Posterior vena cava (tissue), 2 donors: ENCODE measurements at regions of chr1 and their contacts with region 1.

Region 1: DNA sequence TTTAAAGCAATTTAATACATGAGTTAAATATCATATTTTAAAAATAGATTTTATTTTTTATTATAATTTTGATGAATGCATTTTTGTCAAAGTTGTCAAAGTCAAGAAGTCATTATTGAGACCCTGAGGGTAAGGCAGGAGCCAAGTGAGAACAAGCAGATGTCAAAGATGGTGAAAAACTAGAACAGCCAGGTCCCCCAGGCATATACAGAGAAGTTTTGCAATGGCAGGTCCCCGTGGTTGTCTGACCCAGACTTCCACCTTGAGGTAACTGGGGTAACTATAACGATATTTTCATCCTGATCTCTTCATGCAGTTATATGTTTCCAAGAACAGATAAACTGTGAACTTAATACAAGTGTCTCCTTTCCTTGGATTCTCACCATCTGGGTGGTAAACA is 26.5 kb downstream of the PTPRC start:
- DNase-seq: no peak

Region 2: DNA sequence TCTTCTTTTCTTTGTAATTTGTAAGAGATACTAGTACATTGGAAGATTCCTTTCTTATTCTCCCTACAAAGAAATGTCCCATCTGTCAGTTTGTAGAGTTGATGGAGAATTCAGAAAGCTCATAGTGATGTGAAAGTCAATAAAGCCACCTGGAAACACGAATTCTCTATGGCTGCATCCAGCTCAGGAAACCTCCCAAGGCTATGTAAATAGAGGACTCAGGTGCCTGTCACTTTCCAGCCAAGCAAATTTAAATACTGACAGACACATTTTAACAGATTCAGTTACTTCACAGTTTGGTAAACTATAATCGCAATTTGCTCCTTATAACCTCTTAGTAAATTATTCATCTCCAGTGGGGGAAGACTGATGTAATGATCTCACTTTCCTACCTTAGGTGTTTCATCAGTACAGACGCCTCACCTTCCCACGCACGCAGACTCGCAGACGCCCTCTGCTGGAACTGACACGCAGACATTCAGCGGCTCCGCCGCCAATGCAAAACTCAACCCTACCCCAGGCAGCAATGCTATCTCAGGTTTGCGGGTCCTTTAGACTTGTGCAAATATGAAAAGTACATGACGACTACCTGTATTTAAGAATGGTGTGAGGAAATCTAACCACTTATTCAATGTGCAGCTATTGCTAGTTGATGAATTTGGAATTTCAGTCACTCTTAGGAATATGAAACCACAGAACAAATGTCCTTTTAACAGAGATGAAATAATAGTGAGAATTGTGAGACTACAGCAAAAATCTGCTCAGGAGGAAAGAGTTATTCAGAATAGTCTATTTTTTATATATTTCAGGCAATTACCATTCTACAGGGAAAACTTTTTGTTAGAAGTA is 34.1 kb after region 1 on chr1:
- intact Hi-C with region 1: loop called in 1 of 2 experiments (anchors 1 kb)
- DNase-seq: peak; percentile 80